ENCODE measurements at regions of chr9 and their contacts with region 1.

Region 1: DNA sequence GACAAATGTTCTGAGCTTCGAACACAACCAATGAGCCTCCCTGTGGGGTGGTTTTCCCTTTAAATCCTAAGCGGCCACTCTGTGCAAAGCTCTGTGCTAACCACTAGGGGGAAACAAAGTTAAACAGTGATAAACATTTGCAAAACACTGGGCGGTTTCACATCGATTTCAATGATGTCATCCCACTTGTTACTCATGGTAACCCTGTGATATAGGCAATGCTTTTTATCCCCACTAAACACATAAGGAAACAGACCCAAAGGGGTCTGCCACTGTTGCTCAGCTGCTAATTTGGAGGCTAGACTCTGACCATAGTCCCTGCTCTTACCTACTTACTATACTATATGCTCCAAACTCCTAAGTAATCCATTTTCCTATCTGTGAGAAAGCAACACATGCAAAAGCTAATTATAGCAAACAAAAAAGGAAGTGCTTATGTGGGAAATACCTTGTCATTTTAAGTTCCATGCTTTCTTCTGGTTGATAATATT is 57.3 kb downstream of the PTPN3 start:
- DNase-seq: peak in 1 of 2 donors; percentile 77
- H3K4me3 ChIP-seq: no peak overlapping the region
- CTCF ChIP-seq: peak in 1 of 3 donors; percentile 64
- POLR2A ChIP-seq: no peak

Region 2: GRCh38 chr9:109487247-109487646 is 46.4 kb after region 1 on chr9:
- intact Hi-C with region 1: no loop called
- DNase-seq: no peak
- H3K4me3 ChIP-seq: no peak overlapping the region
- CTCF ChIP-seq: no peak
- POLR2A ChIP-seq: no peak

Region 3: DNA sequence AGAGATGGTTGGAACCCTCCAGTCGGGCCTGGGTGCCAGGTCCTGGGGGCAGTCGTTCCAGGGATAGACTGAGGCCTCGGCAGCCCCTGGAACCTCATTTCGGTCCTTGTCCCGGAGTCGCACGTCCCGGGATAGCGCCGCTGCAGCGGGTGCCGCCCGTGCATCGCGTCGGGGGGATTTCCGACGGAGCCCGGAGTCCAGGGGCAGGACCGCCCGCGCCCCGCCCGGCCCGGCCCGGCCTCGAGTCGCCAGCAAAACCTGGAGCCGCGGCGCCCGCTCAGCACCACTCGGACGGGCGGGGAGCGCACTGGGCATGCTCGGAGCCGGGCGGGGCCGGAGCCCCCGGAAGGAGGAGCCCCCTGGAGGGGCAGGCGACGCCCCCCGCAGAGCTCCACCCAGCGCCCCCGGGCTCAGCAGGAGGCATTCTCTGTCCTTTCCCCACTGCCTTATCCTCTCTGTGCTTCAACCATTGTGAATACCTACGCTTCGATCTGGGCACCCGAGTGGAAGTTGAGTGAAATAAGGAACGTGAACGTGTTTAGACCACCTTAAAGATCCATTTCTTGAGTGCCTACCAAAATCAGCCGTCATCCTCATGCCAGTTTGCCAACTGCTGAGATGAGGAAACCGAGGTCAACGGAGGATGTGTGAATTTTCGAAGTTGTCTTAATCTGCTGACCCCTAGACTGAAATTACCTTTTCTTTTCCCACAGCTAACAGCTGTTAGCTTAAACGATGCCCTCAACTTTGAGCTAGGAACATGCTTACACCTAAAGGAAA is 59.0 kb after region 1 on chr9:
- intact Hi-C with region 1: no loop called
- DNase-seq: peak in 1 of 2 donors; percentile 91
- H3K4me3 ChIP-seq: no peak overlapping the region
- CTCF ChIP-seq: no peak
- POLR2A ChIP-seq: no peak

Region 4: GRCh38 chr9:109520478-109521132 is 79.8 kb after region 1 on chr9:
- intact Hi-C with region 1: loop called (anchors 5 kb)
- DNase-seq: peak; percentile 77 to 88
- H3K4me3 ChIP-seq: no peak overlapping the region
- CTCF ChIP-seq: peak in 1 of 3 donors; percentile 54
- POLR2A ChIP-seq: no peak

Region 5: GRCh38 chr9:110217656-110218099 is 776.8 kb after region 1 on chr9:
- intact Hi-C with region 1: no loop called
- DNase-seq: no peak
- H3K4me3 ChIP-seq: no peak overlapping the region
- CTCF ChIP-seq: peak in 1 of 3 donors; percentile 67
- POLR2A ChIP-seq: no peak

Measured in lower leg skin (tissue), 4 donors.